ENCODE measurements at regions of chr17 and their contacts with region 1.

Region 1: GRCh38 chr17:38667099-38667786 is 7.5 kb downstream of the EPOP start:
- DNase-seq: peak; percentile 85 to 86
- H3K4me3 ChIP-seq: no peak overlapping the region
- H3K4me3 Mint-ChIP-seq: no peak overlapping the region
- H3K27ac Mint-ChIP-seq: no peak overlapping the region
- H3K4me1 ChIP-seq: peaks cover 9% of the 10 kb centered on the region
- H3K4me1 Mint-ChIP-seq: peaks cover 22% of the 10 kb centered on the region
- H3K27me3 ChIP-seq: no peaks in the 10 kb centered on the region
- H3K27me3 Mint-ChIP-seq: peaks cover 3% of the 10 kb centered on the region
- CTCF ChIP-seq: peak; percentile 99 to 100

Region 2: GRCh38 chr17:38428112-38428642 is 239.1 kb before region 1 on chr17 and contains the start of gene ARHGAP23:
- CTCF ChIA-PET with region 1: interaction called, 6 read pairs
- POLR2A ChIA-PET with region 1: no interaction called
- intact Hi-C with region 1: loop called (anchors 10 kb)
- DNase-seq: peak in 1 of 2 experiments; percentile 39
- H3K4me3 ChIP-seq: peak within 1 kb of the TSS; percentile 18
- H3K4me3 Mint-ChIP-seq: peak within 1 kb of the TSS; percentile 57
- H3K27ac Mint-ChIP-seq: no peak within 1 kb of the TSS
- H3K4me1 ChIP-seq: no peaks in the 10 kb centered on the region
- H3K4me1 Mint-ChIP-seq: peaks cover 7% of the 10 kb centered on the region
- H3K27me3 ChIP-seq: no peaks in the 10 kb centered on the region
- H3K27me3 Mint-ChIP-seq: no peaks in the 10 kb centered on the region
- CTCF ChIP-seq: no peak
- total RNA-seq, gene ARHGAP23: 69.7 and 83.5 TPM in 2 replicates

Region 3: GRCh38 chr17:38509008-38509771 is 158.1 kb before region 1 on chr17:
- CTCF ChIA-PET with region 1: interaction called, 22 read pairs
- POLR2A ChIA-PET with region 1: no interaction called
- intact Hi-C with region 1: loop called (anchors 5 kb)
- DNase-seq: peak; percentile 93 to 94
- H3K4me3 ChIP-seq: peak overlapping the region; percentile 51
- H3K4me3 Mint-ChIP-seq: peak overlapping the region; percentile 72
- H3K27ac Mint-ChIP-seq: peak overlapping the region; percentile 77
- H3K4me1 ChIP-seq: peaks cover 18% of the 10 kb centered on the region
- H3K4me1 Mint-ChIP-seq: peaks cover 14% of the 10 kb centered on the region
- H3K27me3 ChIP-seq: peaks cover 3% of the 10 kb centered on the region
- H3K27me3 Mint-ChIP-seq: peaks cover 9% of the 10 kb centered on the region
- CTCF ChIP-seq: peak; percentile 95 to 98

Region 4: GRCh38 chr17:38584350-38584925 is 82.8 kb before region 1 on chr17:
- CTCF ChIA-PET with region 1: interaction called, 24 read pairs
- POLR2A ChIA-PET with region 1: no interaction called
- intact Hi-C with region 1: loop called (anchors 1 kb)
- DNase-seq: peak in 1 of 2 experiments; percentile 83
- H3K4me3 ChIP-seq: no peak overlapping the region
- H3K4me3 Mint-ChIP-seq: no peak overlapping the region
- H3K27ac Mint-ChIP-seq: peak overlapping the region; percentile 11
- H3K4me1 ChIP-seq: peaks cover 12% of the 10 kb centered on the region
- H3K4me1 Mint-ChIP-seq: peaks cover 8% of the 10 kb centered on the region
- H3K27me3 ChIP-seq: no peaks in the 10 kb centered on the region
- H3K27me3 Mint-ChIP-seq: no peaks in the 10 kb centered on the region
- CTCF ChIP-seq: peak; percentile 95 to 96

Region 5: GRCh38 chr17:38598536-38598935 is 68.7 kb before region 1 on chr17:
- CTCF ChIA-PET with region 1: interaction called, 17 read pairs
- POLR2A ChIA-PET with region 1: interaction called, 3 read pairs
- intact Hi-C with region 1: no loop called
- DNase-seq: peak; percentile 96
- H3K4me3 ChIP-seq: no peak overlapping the region
- H3K4me3 Mint-ChIP-seq: no peak overlapping the region
- H3K27ac Mint-ChIP-seq: peak overlapping the region; percentile 72
- H3K4me1 ChIP-seq: peaks cover 41% of the 10 kb centered on the region
- H3K4me1 Mint-ChIP-seq: peaks cover 35% of the 10 kb centered on the region
- H3K27me3 ChIP-seq: no peaks in the 10 kb centered on the region
- H3K27me3 Mint-ChIP-seq: no peaks in the 10 kb centered on the region
- CTCF ChIP-seq: no peak

Region 6: DNA sequence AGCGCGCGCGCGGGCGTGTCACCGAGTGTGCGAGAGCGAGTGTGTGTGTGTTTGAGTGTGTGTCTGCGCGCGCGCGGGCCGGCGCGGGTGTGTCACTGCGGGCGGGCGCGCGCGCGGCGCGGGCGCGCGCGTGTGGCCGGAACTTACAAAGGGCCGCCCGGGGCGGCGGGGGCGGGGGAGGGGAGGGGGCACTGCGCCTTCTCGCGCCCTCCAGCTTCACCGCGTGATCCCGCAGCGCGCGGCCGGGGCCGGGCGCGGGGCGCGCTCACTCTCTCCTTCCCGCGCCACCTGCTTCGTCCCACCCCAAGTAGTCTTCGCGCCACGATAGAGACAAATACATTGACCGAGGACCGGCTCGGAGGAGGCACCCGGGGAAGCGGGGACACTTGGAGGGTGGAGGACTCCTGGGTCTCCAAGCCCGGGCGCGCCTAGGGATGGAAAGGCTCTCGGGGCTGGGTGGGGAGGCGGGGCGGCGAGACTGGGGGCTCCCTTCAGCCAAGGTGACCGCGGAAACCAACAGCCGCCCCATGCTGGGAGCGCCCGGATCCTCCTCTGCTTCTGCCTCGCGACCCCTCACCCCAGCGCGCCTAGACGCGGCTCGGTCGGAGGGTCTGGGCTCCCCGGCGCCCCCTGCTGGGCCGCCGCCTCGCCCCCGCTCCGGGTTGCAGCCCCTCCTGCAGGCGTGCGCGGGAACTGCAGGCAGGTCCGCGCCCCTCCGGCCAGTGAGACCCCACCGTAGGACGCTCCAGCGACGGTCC is 61.2 kb before region 1 on chr17 and contains the start of gene SRCIN1:
- CTCF ChIA-PET with region 1: interaction called, 11 read pairs
- POLR2A ChIA-PET with region 1: no interaction called
- intact Hi-C with region 1: loop called (anchors 1 kb)
- DNase-seq: peak; percentile 81 to 86
- H3K4me3 ChIP-seq: peak within 1 kb of the TSS; percentile 87
- H3K4me3 Mint-ChIP-seq: peak within 1 kb of the TSS; percentile 84
- H3K27ac Mint-ChIP-seq: peak within 1 kb of the TSS; percentile 91
- H3K4me1 ChIP-seq: peaks cover 32% of the 10 kb centered on the region
- H3K4me1 Mint-ChIP-seq: peaks cover 32% of the 10 kb centered on the region
- H3K27me3 ChIP-seq: no peaks in the 10 kb centered on the region
- H3K27me3 Mint-ChIP-seq: no peaks in the 10 kb centered on the region
- CTCF ChIP-seq: peak; percentile 98 to 100
- total RNA-seq, gene SRCIN1: 23.6 and 25.8 TPM in 2 replicates

Region 7: DNA sequence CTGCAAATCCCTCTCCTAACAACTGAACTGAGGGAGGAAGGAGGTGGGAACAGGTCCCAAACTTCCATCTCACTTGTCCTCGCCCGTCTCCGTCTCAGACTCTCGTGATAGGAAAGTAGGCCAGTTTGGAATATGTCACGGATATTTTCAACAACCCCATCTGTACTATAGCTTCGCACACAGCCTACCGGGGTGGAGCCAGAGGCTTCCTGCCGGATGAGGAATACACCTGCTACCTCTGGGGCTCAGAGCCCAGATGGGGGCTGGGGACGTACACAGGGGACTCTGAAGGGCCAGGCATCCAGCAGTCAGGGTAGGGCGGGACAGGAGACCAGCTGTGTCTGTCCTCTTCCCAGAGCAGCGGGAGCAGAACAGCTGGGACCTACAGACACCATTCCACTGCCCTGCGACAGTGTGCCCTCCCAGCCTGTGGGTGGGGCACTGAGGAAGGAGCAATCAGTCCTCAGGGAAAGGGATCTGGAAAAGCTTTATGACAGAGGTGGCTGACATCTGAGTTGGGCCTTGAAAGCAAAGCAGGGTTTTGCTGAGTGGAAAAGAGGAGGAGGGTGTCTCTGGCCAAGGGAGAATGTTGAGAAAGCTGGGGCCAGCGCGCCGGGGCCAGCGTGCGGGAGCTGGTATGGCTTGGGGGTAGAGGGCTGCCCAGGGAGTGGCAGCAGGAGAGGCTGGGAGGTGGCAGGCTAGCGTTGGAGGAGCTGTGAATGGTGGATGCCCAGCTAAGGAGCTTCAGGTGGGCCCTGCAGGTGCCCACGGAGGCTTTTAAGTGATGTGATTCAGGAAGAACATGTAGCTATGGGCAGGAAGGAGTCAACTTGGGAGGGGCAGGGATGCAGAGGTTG is 50.0 kb before region 1 on chr17:
- CTCF ChIA-PET with region 1: interaction called, 21 read pairs
- POLR2A ChIA-PET with region 1: interaction called, 6 read pairs
- intact Hi-C with region 1: loop called (anchors 2 kb)
- DNase-seq: no peak
- H3K4me3 ChIP-seq: no peak overlapping the region
- H3K4me3 Mint-ChIP-seq: no peak overlapping the region
- H3K27ac Mint-ChIP-seq: no peak overlapping the region
- H3K4me1 ChIP-seq: peaks cover 28% of the 10 kb centered on the region
- H3K4me1 Mint-ChIP-seq: peaks cover 36% of the 10 kb centered on the region
- H3K27me3 ChIP-seq: no peaks in the 10 kb centered on the region
- H3K27me3 Mint-ChIP-seq: no peaks in the 10 kb centered on the region
- CTCF ChIP-seq: peak in 1 of 2 experiments; percentile 13